ENCODE measurements at regions of chr9 and their contacts with region 1.

Region 1: GRCh38 chr9:124532897-124533296 is 25.7 kb upstream of the NR5A1 start:
- DNase-seq: no peak
- H3K4me3 ChIP-seq: no peak overlapping the region
- H3K27ac ChIP-seq: no peak overlapping the region
- H3K4me1 ChIP-seq: peaks cover 0 to 10% of the 10 kb centered on the region in 2 experiments; a peak in 1 of 4 replicates
- H3K27me3 ChIP-seq: no peaks in the 10 kb centered on the region
- CTCF ChIP-seq: no peak
- EP300 ChIP-seq: no peak
- RAD21 ChIP-seq: no peak

Region 2: DNA sequence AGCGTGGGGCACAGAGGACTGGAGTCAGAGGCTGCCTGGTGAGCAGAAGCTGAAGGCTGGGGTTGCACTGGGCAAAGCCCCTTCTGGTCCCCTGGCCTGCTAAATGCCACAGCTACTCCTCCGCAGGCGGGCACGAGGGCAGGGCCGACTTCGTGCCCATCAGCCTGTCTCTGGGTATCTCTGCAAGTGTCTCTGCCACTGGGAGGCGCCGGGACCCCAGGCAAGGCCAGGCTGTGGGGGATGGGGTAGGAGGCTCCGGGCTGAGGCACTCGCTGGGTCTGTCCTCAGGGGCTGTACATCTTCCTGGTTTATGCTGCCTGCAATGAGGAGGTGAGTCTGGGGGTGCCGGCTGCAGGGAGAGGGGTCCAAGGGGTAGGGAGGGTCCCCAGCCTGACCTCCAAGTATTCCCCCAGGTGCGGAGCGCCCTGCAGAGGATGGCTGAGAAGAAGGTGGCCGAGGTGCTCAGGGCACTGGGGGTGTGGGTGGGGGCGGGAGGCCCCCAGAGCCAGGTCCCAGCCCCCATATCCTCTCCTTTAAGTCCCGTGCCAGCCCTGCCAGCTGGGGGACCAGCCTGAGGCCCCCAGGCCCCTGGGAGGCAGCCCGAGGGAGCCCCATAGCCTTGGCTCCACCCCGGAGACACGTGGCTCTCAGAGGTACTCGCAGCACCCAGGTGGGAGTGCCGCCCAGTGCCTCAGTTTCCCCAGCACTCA is 57.6 kb before region 1 on chr9:
- CTCF ChIA-PET with region 1: interaction called, 10 read pairs
- POLR2A ChIA-PET with region 1: no interaction called
- DNase-seq: peak; percentile 65
- H3K4me3 ChIP-seq: no peak overlapping the region
- H3K27ac ChIP-seq: no peak overlapping the region
- H3K4me1 ChIP-seq: peaks cover 0 to 10% of the 10 kb centered on the region in 2 experiments; a peak in 1 of 4 replicates
- H3K27me3 ChIP-seq: no peaks in the 10 kb centered on the region; the same call in 1 of the 2 replicates
- CTCF ChIP-seq: no peak
- EP300 ChIP-seq: no peak
- RAD21 ChIP-seq: peak; percentile 54

Measured in SK-N-SH (cell line).